ENCODE measurements at regions of chr4 and their contacts with region 1.

Region 1: DNA sequence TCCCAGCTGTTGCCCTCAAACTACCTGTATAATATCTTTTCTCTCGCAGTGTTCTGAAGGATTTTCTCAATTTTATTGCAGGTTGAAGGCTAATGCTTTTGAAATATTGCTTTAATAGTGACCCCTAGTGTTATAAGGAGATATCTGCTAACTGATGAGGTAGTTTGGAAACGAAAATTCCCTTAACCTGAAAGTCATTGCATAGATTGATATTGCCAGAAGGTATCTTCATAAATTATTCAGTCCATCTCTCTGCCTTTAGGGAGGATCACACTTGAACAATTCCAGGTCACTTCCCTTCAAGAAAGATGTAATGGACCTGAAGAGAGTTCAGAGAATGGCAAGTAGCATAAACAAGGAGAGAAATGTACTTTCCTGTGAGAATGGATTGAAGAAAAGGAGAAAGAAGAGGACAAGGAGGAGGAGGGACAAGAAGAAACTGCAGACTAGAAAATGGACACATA is 44.1 kb downstream of the TIGD4 start:
- DNase-seq: no peak
- H3K4me3 Mint-ChIP-seq: no peak overlapping the region
- H3K27ac Mint-ChIP-seq: no peak overlapping the region
- H3K4me1 Mint-ChIP-seq: peaks cover 24% of the 10 kb centered on the region
- H3K27me3 Mint-ChIP-seq: no peaks in the 10 kb centered on the region
- CTCF ChIP-seq: no peak

Region 2: DNA sequence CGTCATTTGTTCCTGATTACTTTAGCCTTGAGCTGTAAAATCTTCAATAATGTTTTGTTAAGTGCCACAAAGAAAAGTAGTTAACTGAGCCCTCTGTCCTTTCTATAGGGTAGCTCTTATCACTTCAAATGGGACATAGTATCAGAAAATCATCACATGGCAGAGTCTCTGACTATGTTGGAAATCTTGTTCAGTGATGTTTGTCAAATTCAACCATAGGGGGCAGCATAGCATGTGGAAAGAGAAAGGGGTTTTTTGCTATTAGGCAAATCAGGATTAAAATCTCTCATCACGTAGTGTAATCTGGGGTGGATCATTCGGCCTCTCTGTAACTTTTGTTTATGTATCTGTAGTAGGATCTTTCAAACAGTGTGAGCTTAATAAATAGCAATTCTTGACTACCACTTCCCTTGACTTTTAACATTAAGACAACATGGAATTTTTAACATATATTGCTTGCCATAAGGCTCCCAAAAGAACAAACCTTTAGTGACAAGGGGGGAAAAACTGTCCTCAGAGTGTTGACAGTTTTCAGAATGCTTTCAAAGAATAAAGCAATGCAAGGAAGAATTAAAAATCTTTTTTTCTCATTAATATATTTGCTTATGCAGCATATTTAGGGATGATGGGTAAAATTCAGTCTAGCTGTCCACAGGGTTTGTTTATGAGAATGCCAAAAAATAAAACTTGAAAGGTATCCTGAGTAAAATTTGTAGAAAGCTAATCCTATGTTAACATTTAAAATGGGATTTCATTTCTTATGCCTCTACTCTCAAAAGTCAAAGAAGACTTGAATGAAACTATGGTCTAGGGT is 326.7 kb before region 1 on chr4:
- CTCF ChIA-PET with region 1: no interaction called
- intact Hi-C with region 1: loop called (anchors 10 kb)
- DNase-seq: no peak
- H3K4me3 Mint-ChIP-seq: no peak overlapping the region
- H3K27ac Mint-ChIP-seq: no peak overlapping the region
- H3K4me1 Mint-ChIP-seq: no peaks in the 10 kb centered on the region
- H3K27me3 Mint-ChIP-seq: no peaks in the 10 kb centered on the region
- CTCF ChIP-seq: peak; percentile 31

Region 3: GRCh38 chr4:152454398-152455011 is 280.9 kb before region 1 on chr4:
- CTCF ChIA-PET with region 1: no interaction called
- intact Hi-C with region 1: loop called (anchors 5 kb)
- DNase-seq: no peak
- H3K4me3 Mint-ChIP-seq: no peak overlapping the region
- H3K27ac Mint-ChIP-seq: no peak overlapping the region
- H3K4me1 Mint-ChIP-seq: peaks cover 42% of the 10 kb centered on the region
- H3K27me3 Mint-ChIP-seq: no peaks in the 10 kb centered on the region
- CTCF ChIP-seq: no peak

Region 4: DNA sequence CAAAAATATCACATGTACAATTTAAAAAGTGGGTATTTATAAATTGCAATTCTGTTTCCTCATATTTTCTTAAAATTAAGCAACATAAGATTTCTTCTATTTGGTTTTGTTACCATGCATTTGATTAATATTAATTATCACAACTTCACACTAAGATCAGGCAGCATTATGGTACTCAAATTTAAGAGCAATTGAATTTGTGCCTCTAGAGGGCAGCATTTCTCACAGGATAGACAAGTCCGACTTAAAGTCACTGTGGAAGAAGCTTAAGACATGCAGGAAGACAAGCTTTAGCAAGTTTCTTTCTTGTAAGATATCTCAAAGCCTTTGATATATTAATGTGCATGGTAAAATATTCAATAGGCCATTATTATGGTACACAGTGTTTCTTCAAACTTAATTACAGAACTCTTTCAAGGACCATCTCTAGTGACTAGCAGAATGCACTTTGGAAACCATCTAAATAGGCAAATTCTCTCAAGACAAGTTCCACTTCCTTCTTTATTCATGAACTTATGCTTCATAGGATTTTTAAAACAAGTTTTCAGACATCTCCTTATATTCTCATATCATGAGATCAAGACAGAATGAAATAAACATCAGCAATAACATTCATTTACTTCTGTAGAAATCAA is 234.5 kb before region 1 on chr4:
- CTCF ChIA-PET with region 1: no interaction called
- intact Hi-C with region 1: loop called (anchors 5 kb)
- DNase-seq: peak; percentile 58
- H3K4me3 Mint-ChIP-seq: no peak overlapping the region
- H3K27ac Mint-ChIP-seq: no peak overlapping the region
- H3K4me1 Mint-ChIP-seq: peaks cover 17% of the 10 kb centered on the region
- H3K27me3 Mint-ChIP-seq: no peaks in the 10 kb centered on the region
- CTCF ChIP-seq: peak; percentile 43

Region 5: DNA sequence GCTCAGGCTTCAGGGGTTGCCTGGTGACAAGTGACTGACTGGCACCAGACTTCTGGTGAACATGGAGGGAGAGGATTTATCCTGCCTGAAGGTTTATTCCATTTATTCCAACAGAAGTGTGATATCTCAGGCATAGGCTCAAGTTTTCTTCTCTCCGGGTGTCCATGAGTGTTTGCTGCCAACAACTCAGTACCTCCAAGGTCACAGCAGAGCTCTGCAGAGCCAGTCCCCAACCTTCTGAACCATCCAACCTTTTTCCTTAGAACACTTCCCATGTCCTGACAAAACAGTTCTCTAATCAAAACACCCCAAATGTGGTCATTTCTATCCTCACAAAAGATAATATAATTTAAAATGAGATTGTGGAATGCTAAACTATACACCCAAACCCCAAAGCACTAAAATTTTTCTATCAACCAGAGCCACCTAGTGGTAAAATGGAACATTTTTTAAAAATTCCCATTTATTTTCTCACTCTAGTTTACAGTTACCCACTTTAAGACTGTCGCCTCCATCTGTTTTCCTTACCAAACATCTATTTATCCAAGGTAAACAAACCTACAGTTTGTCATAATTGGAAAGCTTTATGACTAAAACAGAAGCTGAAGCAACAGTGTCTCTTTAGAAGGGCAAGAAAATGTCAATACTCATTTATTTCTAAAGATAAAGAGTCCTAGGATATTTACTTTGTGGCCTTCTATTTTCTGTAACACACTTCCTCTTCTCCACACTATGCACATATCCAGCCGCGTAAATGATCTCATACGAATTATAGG is 95.2 kb before region 1 on chr4:
- CTCF ChIA-PET with region 1: no interaction called
- intact Hi-C with region 1: loop called (anchors 2 kb)
- DNase-seq: no peak
- H3K4me3 Mint-ChIP-seq: no peak overlapping the region
- H3K27ac Mint-ChIP-seq: no peak overlapping the region
- H3K4me1 Mint-ChIP-seq: no peaks in the 10 kb centered on the region
- H3K27me3 Mint-ChIP-seq: no peaks in the 10 kb centered on the region
- CTCF ChIP-seq: peak; percentile 14

Region 6: GRCh38 chr4:152679414-152680281 is 55.8 kb before region 1 on chr4 and contains the start of gene TMEM154:
- CTCF ChIA-PET with region 1: interaction called, 3 read pairs
- intact Hi-C with region 1: loop called (anchors 5 kb)
- DNase-seq: peak; percentile 49
- H3K4me3 Mint-ChIP-seq: peak within 1 kb of the TSS; percentile 76
- H3K27ac Mint-ChIP-seq: peak within 1 kb of the TSS; percentile 91
- H3K4me1 Mint-ChIP-seq: peaks cover 28% of the 10 kb centered on the region
- H3K27me3 Mint-ChIP-seq: no peaks in the 10 kb centered on the region
- CTCF ChIP-seq: no peak
- total RNA-seq, gene TMEM154: 23.3 and 26.4 TPM in 2 replicates

Measured in Calu3 (cell line).